H1 (cell line): ENCODE measurements at regions of chr19 and their contacts with region 1.

Region 1: DNA sequence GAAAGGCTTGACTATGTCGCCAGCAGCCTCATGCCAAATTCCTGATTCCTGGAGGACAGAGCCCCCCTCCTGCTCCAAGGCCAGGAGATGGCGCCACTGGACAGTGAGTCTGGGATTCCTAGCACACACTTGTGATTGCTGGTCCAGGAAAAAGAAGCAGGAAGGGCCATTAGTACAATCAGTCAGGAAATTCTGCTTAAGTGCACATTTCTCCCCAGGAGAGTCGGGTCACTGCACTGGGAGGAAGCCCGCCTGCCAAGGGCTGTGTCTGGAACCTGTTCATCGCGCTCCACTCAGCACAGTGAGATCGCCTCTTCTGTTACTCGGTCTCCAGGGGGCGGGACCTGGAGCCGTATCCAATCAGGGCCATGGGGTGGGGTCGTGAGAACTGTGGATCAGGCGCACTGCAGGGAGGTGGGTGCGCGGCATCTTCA is 65.1 kb downstream of the ZNF823 start:
- DNase-seq: peak; percentile 44 to 80
- H3K4me3 ChIP-seq: peak overlapping the region; percentile 46 to 72 (median 68)
- H3K27ac ChIP-seq: no peak overlapping the region
- H3K4me1 ChIP-seq: peaks cover 0 to 3% (median 0%) of the 10 kb centered on the region in 4 experiments; a peak in 2 of 7 replicates
- H3K27me3 ChIP-seq: peaks cover 0 to 3% (median 1%) of the 10 kb centered on the region in 4 experiments; a peak in 1 of 7 replicates
- CTCF ChIP-seq: peak; percentile 86 to 95 (median 93)
- EP300 ChIP-seq: no peak
- POLR2A ChIP-seq: no peak
- RAD21 ChIP-seq: peak; percentile 83 to 88

Region 2: GRCh38 chr19:11626252-11626651 is 47.4 kb before region 1 on chr19:
- CTCF ChIA-PET with region 1: no interaction called
- POLR2A ChIA-PET with region 1: no interaction called
- DNase-seq: no peak
- H3K4me3 ChIP-seq: no peak overlapping the region
- H3K27ac ChIP-seq: no peak overlapping the region
- H3K4me1 ChIP-seq: peaks cover 0 to 4% (median 1%) of the 10 kb centered on the region in 4 experiments; a peak in 3 of 7 replicates
- H3K27me3 ChIP-seq: peaks cover 0 to 4% (median 2%) of the 10 kb centered on the region in 4 experiments; a peak in 3 of 7 replicates
- CTCF ChIP-seq: no peak
- EP300 ChIP-seq: no peak
- POLR2A ChIP-seq: no peak
- RAD21 ChIP-seq: no peak

Region 3: GRCh38 chr19:11663181-11663591 is 10.4 kb before region 1 on chr19:
- CTCF ChIA-PET with region 1: interaction called, 20 read pairs
- POLR2A ChIA-PET with region 1: no interaction called
- DNase-seq: no peak
- H3K4me3 ChIP-seq: no peak overlapping the region
- H3K27ac ChIP-seq: no peak overlapping the region
- H3K4me1 ChIP-seq: peaks cover 0 to 2% (median 0%) of the 10 kb centered on the region in 4 experiments; a peak in 1 of 7 replicates
- H3K27me3 ChIP-seq: no peaks in the 10 kb centered on the region
- CTCF ChIP-seq: no peak
- EP300 ChIP-seq: no peak
- POLR2A ChIP-seq: no peak
- RAD21 ChIP-seq: no peak